Right cardiac atrium (tissue), 5 donors: ENCODE measurements at regions of chr3 and their contacts with region 1.

Region 1: GRCh38 chr3:50192689-50193141 is 1.3 kb downstream of the GNAT1 start:
- DNase-seq: peak; percentile 57 to 88 (median 84)
- ATAC-seq: peak in 1 of 2 donors; percentile 5
- H3K4me3 ChIP-seq: no peak overlapping the region
- H3K27ac ChIP-seq: no peak overlapping the region
- H3K4me1 ChIP-seq: no peaks in the 10 kb centered on the region
- H3K27me3 ChIP-seq: no peaks in the 10 kb centered on the region

Region 2: DNA sequence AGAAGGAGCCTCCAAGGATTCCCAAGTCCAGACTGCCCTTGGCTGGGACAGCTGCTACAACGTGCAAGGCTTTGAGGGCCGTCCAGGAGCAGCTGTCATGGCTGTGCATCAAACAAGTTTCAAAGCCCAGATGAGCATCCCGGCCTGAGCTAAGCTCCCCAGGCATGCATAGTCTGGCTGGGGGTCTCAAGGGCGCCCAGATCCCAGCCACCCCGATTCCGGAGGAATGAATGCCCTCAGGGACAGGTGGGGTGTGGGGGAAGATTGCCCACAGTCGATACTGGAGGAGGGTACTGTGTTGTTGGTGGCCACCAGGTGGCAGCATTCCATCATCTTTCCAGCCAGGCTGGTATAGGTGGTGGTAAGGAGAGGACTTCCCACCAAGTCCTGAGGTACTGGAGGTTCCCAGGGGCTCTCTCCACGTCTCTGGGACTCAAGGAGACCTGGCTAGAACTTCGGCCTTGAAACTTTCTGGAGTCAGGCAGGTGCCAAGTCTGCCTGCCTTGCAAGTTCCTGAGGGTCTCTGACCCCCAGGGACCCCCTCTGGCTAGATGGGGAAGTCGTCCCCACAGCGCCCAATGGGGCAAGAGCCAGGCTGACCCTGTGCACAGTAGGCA is 71.2 kb before region 1 on chr3:
- intact Hi-C with region 1: loop called (anchors 2 to 5 kb)
- DNase-seq: peak; percentile 81 to 88 (median 85)
- ATAC-seq: peak; percentile 82
- H3K4me3 ChIP-seq: no peak overlapping the region
- H3K27ac ChIP-seq: no peak overlapping the region
- H3K4me1 ChIP-seq: no peaks in the 10 kb centered on the region
- H3K27me3 ChIP-seq: no peaks in the 10 kb centered on the region

Region 3: DNA sequence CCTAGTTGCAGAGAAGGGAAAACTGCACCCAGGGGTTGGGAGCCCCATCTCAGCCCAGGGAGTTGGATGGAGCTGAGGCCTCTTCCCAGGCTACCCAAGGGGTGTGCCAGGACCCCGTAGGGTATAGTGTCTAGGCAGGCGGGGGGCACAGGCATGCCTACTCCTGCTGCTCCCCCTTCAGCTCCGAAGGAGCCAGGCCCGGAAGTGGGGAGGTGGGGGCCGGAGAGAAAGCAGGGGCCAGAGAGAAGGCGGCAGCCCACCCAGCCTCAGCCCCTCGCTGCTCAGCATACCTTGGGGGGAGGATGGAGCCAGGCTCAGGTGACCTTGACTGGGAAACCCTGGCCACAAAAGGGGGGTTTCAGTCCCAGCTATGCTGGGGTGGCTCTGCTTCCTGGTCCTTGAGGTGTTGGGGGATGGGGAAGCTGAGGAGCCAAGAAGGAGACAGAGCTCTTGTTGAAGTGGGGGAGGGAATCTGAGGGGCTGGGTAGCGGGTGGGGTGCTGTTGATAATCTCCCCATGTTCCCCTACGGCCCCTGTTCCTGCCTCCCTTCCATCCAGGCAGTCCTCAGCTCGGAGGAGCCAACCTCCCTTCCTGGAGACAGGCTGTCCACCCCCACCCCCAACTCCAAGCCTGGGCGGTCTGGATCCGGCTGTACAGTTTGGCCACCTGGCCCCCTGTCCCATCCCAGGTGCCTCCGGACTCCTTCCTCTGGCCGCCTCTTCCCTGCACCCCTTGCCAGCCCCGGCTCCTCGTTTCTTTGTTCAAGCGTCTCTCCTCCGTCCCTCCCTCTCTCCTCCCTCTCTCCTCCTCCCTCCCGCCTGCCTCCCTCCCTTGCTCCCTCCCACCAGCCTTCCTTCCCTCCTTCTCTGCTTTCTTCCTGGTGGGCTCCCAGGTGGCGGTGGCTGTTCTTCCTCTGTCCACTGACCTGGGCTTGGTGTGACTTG is 35.9 kb before region 1 on chr3:
- intact Hi-C with region 1: loop called in 1 of 4 experiments (anchors 2 kb)
- DNase-seq: peak in 1 of 3 donors; percentile 56
- ATAC-seq: no peak
- H3K4me3 ChIP-seq: peak overlapping the region; percentile 60
- H3K27ac ChIP-seq: peak overlapping the region; percentile 32
- H3K4me1 ChIP-seq: no peaks in the 10 kb centered on the region
- H3K27me3 ChIP-seq: no peaks in the 10 kb centered on the region

Region 4: GRCh38 chr3:50272911-50273693 is 80.4 kb after region 1 on chr3:
- intact Hi-C with region 1: loop called (anchors 2 to 5 kb)
- DNase-seq: peak; percentile 81 to 95 (median 94)
- ATAC-seq: peak; percentile 58 to 63
- H3K4me3 ChIP-seq: no peak overlapping the region
- H3K27ac ChIP-seq: no peak overlapping the region
- H3K4me1 ChIP-seq: peaks cover 2% of the 10 kb centered on the region
- H3K27me3 ChIP-seq: no peaks in the 10 kb centered on the region

Region 5: DNA sequence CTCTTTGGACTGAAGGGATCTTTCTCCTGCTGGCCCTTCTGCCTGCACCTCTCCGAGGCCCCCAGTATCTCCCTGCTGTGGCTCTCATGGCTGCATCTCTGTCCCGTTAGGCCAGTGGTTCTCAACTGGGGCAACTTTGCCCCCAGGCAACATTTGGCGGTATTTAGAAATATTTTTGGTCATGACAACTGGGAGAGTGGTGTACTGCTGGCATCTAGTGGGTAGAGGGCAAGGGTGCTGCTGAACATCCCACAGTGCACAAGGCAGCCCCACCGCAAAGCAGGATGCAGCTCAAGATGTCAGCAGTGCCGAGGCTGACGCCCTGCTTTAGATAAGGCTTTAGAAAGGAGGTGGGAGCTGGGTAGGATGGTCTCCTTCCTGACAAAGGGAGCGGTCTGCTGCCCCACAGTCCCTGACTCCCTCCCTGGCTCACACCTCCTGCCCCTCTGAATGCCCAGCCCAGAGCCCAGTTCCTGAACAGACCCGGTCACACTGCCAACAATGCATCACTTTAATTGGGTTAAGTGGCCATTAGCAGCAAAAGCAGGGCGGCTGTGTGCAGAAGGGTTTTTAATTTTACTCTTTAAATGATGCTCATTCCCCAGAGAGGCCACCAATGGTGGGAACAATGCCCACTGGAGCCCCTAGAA is 235.4 kb after region 1 on chr3:
- intact Hi-C with region 1: no loop called
- DNase-seq: no peak
- ATAC-seq: no peak
- H3K4me3 ChIP-seq: no peak overlapping the region
- H3K27ac ChIP-seq: no peak overlapping the region
- H3K4me1 ChIP-seq: no peaks in the 10 kb centered on the region
- H3K27me3 ChIP-seq: no peaks in the 10 kb centered on the region